PC-9 (cell line): ENCODE measurements at regions of chr3 and their contacts with region 1.

Region 1: GRCh38 chr3:24853685-24854490 is 359.2 kb upstream of the THRB start:
- DNase-seq: no peak
- H3K4me3 ChIP-seq: no peak overlapping the region
- H3K27ac ChIP-seq: no peak overlapping the region
- H3K4me1 ChIP-seq: no peaks in the 10 kb centered on the region
- H3K27me3 ChIP-seq: no peaks in the 10 kb centered on the region
- CTCF ChIP-seq: no peak

Region 2: GRCh38 chr3:24832878-24833277 is 21.0 kb before region 1 on chr3:
- CTCF ChIA-PET with region 1: no interaction called
- POLR2A ChIA-PET with region 1: no interaction called
- intact Hi-C with region 1: loop called (anchors 1 kb)
- DNase-seq: no peak
- H3K4me3 ChIP-seq: no peak overlapping the region
- H3K27ac ChIP-seq: no peak overlapping the region
- H3K4me1 ChIP-seq: no peaks in the 10 kb centered on the region
- H3K27me3 ChIP-seq: peaks cover 14% of the 10 kb centered on the region; the same call in 1 of the 2 replicates
- CTCF ChIP-seq: no peak